Natural killer cell (primary cell): ENCODE measurements at regions of chr12 and their contacts with region 1.

Region 1: GRCh38 chr12:25250744-25251730 is at the start of gene KRAS:
- DNase-seq: peak; percentile 87 to 97
- ATAC-seq: peak; percentile 86 to 96 (median 87)
- H3K4me3 ChIP-seq: peak within 1 kb of the TSS; percentile 93
- H3K4me3 Mint-ChIP-seq: peak within 1 kb of the TSS; percentile 93
- H3K27ac ChIP-seq: peak within 1 kb of the TSS; percentile 80
- H3K27ac Mint-ChIP-seq: peak within 1 kb of the TSS; percentile 85 to 93
- H3K4me1 ChIP-seq: peaks cover 17% of the 10 kb centered on the region
- H3K4me1 Mint-ChIP-seq: peaks cover 21 to 38% of the 10 kb centered on the region in 2 donors
- H3K27me3 ChIP-seq: no peaks in the 10 kb centered on the region
- H3K27me3 Mint-ChIP-seq: no peaks in the 10 kb centered on the region
- CTCF ChIP-seq: no peak
- total RNA-seq, gene KRAS: 33.3 to 39.6 (median 35.7) TPM

Region 2: GRCh38 chr12:25195056-25195971 is 55.7 kb before region 1 on chr12 and contains the starts of genes DNAI7 and ETFRF1:
- intact Hi-C with region 1: loop called (anchors 5 kb)
- DNase-seq: peak; percentile 98 to 99
- ATAC-seq: peak; percentile 97 to 100 (median 98)
- H3K4me3 ChIP-seq: peak within 1 kb of the TSS; percentile 85
- H3K4me3 Mint-ChIP-seq: peak within 1 kb of the TSS; percentile 99
- H3K27ac ChIP-seq: peak within 1 kb of the TSS; percentile 95
- H3K27ac Mint-ChIP-seq: peak within 1 kb of the TSS; percentile 99
- H3K4me1 ChIP-seq: peaks cover 6% of the 10 kb centered on the region
- H3K4me1 Mint-ChIP-seq: peaks cover 21 to 31% of the 10 kb centered on the region in 2 donors
- H3K27me3 ChIP-seq: no peaks in the 10 kb centered on the region
- H3K27me3 Mint-ChIP-seq: no peaks in the 10 kb centered on the region
- CTCF ChIP-seq: no peak
- total RNA-seq, gene DNAI7: 0.15 to 0.59 (median 0.48) TPM
- total RNA-seq, gene ETFRF1: 17.5 to 42.8 (median 26.1) TPM

Region 3: GRCh38 chr12:25311506-25311905 is 60.5 kb after region 1 on chr12:
- intact Hi-C with region 1: no loop called
- DNase-seq: no peak
- ATAC-seq: no peak
- H3K4me3 ChIP-seq: no peak overlapping the region
- H3K4me3 Mint-ChIP-seq: no peak overlapping the region
- H3K27ac ChIP-seq: no peak overlapping the region
- H3K27ac Mint-ChIP-seq: no peak overlapping the region
- H3K4me1 ChIP-seq: no peaks in the 10 kb centered on the region
- H3K4me1 Mint-ChIP-seq: no peaks in the 10 kb centered on the region
- H3K27me3 ChIP-seq: no peaks in the 10 kb centered on the region
- H3K27me3 Mint-ChIP-seq: no peaks in the 10 kb centered on the region
- CTCF ChIP-seq: no peak

Region 4: DNA sequence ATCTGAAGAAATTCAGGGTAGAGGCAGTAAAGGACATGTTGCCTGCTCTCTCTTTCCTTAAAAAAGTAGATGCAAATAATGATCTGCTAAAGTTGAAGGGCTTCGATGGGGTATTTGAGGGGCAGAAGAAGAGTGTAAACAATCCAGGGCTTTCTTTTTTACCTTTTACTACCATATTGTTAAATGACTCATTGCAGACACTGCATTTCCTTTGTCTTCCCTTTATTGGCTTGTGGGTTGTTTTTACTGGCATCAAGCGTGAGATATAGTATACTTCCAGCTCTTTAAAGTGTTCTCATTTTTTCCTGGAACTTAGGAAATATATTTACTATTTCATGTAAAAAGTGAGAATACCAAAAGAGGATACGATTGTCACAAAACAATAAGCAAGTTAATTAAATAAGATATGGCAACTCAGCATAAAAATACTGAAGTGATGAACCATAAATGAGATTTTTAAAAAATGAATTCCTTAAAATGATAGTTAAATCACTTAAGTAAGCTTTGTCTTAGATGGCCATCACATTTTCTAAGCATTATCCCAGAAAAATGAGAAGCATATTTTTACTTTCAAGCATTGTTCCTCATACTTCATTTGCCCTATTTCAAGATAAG is 72.0 kb after region 1 on chr12:
- intact Hi-C with region 1: loop called (anchors 2 kb)
- DNase-seq: peak in 1 of 2 donors; percentile 31
- ATAC-seq: peak in 1 of 3 donors; percentile 48
- H3K4me3 ChIP-seq: no peak overlapping the region
- H3K4me3 Mint-ChIP-seq: peak overlapping the region; percentile 78
- H3K27ac ChIP-seq: peak overlapping the region; percentile 57
- H3K27ac Mint-ChIP-seq: peak overlapping the region; percentile 76 to 85
- H3K4me1 ChIP-seq: peaks cover 11% of the 10 kb centered on the region
- H3K4me1 Mint-ChIP-seq: peaks cover 31 to 46% of the 10 kb centered on the region in 2 donors
- H3K27me3 ChIP-seq: no peaks in the 10 kb centered on the region
- H3K27me3 Mint-ChIP-seq: no peaks in the 10 kb centered on the region
- CTCF ChIP-seq: no peak